Activated CD4-positive, alpha-beta memory T cell treated with anti-CD3 and anti-CD28 coated beads for 36 hours (primary cell): ENCODE measurements at regions of chr17 and their contacts with region 1.

Region 1: DNA sequence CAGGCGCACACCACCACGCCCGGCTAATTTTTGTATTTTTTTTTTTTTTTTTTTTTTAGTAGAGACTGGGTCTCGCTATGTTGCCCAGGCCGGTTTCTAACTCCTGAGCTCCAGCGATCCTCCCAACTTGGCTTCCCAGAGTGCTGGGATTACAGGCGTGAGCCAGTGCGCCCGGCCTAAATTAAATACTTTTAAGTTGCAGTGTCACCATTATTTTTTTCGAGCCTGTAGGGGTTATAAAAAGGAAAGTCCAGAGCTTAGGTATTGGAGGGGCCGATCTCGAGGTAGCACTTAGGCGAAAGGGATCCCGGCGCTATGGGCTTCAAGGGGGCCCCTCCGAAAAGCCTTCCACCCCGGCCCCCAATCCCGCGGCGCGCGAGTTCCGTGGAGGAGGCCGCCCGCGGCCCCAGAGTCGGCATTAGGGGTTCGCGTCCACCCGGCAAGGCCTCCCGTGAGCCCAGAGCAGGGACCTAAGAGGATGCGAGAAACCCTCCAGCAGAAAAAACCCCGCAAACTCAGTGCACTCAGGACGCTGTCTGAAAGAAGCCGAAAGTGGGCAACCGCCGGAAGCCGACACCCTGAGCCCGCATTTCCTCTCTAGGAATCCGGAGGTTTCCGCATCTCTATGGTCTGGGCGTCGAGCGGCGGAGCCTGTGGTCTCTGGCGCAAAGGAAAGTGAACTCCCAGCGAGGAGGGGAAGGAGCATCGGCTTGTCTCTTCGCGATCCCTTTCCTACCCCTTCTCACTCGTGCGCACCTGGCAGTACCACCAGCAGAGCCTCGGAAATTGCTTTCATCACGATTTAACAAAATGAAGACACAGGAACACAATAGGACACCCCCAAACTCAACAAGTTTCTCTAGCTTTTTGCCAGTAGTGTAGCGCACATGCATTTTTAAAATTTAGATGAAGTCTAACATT is 14.1 kb upstream of the RGS9 start:
- DNase-seq: peak; percentile 90
- H3K4me3 Mint-ChIP-seq: peak overlapping the region; percentile 78
- H3K27ac Mint-ChIP-seq: peak overlapping the region; percentile 90
- H3K4me1 Mint-ChIP-seq: peaks cover 23% of the 10 kb centered on the region
- H3K27me3 Mint-ChIP-seq: no peaks in the 10 kb centered on the region

Region 2: DNA sequence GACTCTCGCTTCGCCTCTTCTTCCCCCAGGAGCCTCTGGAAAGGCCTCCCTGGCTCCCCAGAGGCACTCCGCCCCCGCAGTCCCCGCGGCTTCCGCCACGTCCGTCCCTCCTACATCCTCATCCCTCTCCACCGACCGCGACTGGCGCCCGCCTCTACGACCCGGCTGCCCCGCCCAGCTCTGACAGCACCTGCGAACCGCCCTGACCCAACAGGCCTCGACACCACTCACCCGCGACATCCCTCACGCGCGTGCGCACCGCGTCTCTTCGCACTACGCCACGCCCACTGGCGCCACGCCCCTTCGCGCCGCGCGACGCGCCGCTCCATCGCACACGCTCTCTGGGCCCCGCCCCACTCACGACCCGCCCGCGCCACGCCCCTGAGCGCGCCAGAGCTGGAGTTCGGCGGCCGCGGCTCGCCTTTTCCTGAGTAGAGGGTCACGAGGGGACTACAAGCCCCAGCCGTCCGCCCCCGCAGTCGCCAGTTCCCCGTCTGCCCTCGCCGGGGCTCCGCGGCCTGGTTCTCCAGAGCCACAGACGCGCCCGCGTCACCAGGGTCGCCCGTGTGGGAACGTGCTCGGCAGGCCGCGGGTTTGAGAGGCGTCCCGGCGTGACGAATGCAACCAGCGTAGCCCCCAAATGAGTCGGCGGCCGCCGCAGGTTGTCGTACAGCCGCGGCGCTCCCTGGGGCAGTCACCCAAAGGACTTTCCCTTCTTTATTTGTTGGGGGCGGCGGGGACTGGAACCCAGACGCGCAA is 147.6 kb before region 1 on chr17:
- CTCF ChIA-PET with region 1: no interaction called
- POLR2A ChIA-PET with region 1: interaction called, 4 read pairs
- intact Hi-C with region 1: loop called (anchors 1 kb)
- DNase-seq: peak; percentile 97
- H3K4me3 Mint-ChIP-seq: peak overlapping the region; percentile 82
- H3K27ac Mint-ChIP-seq: peak overlapping the region; percentile 100
- H3K4me1 Mint-ChIP-seq: peaks cover 55% of the 10 kb centered on the region
- H3K27me3 Mint-ChIP-seq: no peaks in the 10 kb centered on the region

Region 3: DNA sequence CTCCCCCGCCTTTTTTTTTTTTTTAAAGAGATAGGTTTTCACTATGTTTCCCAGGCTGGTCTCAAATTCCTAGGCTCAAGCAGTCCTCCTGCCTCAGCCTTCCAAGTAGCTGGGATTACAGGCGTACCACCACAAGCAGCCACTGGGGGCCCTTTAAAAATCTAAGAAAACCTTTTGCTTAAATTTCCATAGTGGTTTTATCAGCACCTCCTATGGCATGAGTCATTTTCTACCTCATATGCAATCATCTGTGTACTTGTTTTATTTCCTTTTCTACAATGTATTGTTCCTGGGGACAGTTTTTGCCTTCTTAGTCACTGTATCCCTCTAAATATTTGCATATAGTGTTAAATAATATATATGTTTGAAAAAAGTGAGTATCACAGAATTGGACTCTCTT is 95.8 kb before region 1 on chr17:
- CTCF ChIA-PET with region 1: no interaction called
- POLR2A ChIA-PET with region 1: no interaction called
- intact Hi-C with region 1: loop called (anchors 1 kb)
- DNase-seq: peak; percentile 75
- H3K4me3 Mint-ChIP-seq: peak overlapping the region; percentile 62
- H3K27ac Mint-ChIP-seq: peak overlapping the region; percentile 96
- H3K4me1 Mint-ChIP-seq: peaks cover 83% of the 10 kb centered on the region
- H3K27me3 Mint-ChIP-seq: no peaks in the 10 kb centered on the region

Region 4: GRCh38 chr17:65039336-65039988 is 83.6 kb before region 1 on chr17:
- CTCF ChIA-PET with region 1: no interaction called
- POLR2A ChIA-PET with region 1: interaction called, 3 read pairs
- intact Hi-C with region 1: loop called (anchors 2 kb)
- DNase-seq: peak; percentile 65
- H3K4me3 Mint-ChIP-seq: peak overlapping the region; percentile 60
- H3K27ac Mint-ChIP-seq: peak overlapping the region; percentile 87
- H3K4me1 Mint-ChIP-seq: peaks cover 81% of the 10 kb centered on the region
- H3K27me3 Mint-ChIP-seq: no peaks in the 10 kb centered on the region

Region 5: GRCh38 chr17:65137021-65137991 is 14.2 kb after region 1 on chr17 and contains the start of gene RGS9:
- CTCF ChIA-PET with region 1: interaction called, 8 read pairs
- POLR2A ChIA-PET with region 1: interaction called, 3 read pairs
- intact Hi-C with region 1: loop called (anchors 2 kb)
- DNase-seq: peak; percentile 89
- H3K4me3 Mint-ChIP-seq: peak within 1 kb of the TSS; percentile 72
- H3K27ac Mint-ChIP-seq: no peak within 1 kb of the TSS
- H3K4me1 Mint-ChIP-seq: peaks cover 27% of the 10 kb centered on the region
- H3K27me3 Mint-ChIP-seq: peaks cover 11% of the 10 kb centered on the region
- total RNA-seq, gene RGS9: 6.4 to 8.7 TPM

Region 6: GRCh38 chr17:65173284-65173793 is 50.2 kb after region 1 on chr17:
- CTCF ChIA-PET with region 1: interaction called, 3 read pairs
- POLR2A ChIA-PET with region 1: no interaction called
- intact Hi-C with region 1: loop called (anchors 2 kb)
- DNase-seq: peak; percentile 91
- H3K4me3 Mint-ChIP-seq: no peak overlapping the region
- H3K27ac Mint-ChIP-seq: no peak overlapping the region
- H3K4me1 Mint-ChIP-seq: peaks cover 34% of the 10 kb centered on the region
- H3K27me3 Mint-ChIP-seq: no peaks in the 10 kb centered on the region

Region 7: DNA sequence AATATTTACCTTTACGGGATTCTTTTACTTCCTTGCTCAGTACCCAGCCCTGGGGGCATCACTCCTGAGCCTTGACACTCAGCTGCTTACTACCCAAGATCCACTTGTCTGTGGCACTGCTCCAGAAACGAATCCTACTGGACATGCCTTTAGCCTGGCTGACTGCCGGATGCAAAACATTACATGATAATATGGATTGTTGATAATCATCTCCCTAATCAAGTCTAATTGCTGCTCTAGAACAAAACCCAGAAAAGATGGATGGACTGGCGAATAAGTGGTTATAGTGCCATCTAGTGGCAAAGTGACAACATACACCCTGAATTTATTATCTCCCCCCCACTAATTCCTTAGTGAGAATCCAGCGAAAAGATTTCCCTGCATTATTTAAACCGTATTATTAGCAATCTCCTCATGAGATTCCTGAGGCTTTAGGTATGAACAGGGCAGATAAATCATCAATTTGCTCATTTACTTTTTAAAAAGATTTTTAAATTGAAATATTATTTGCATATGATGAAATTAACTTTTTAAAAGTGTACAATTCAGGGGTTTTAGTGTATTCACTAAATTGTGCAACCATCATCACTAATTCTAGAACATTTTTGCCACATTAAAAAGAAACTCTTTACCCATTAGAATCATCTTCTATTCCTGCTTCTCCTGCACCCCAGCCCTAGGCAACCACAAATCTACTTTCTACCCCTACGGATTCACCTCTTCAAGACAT is 75.7 kb after region 1 on chr17:
- CTCF ChIA-PET with region 1: interaction called, 3 read pairs
- POLR2A ChIA-PET with region 1: no interaction called
- intact Hi-C with region 1: loop called (anchors 1 kb)
- DNase-seq: no peak
- H3K4me3 Mint-ChIP-seq: no peak overlapping the region
- H3K27ac Mint-ChIP-seq: no peak overlapping the region
- H3K4me1 Mint-ChIP-seq: peaks cover 26% of the 10 kb centered on the region
- H3K27me3 Mint-ChIP-seq: peaks cover 2% of the 10 kb centered on the region